ENCODE measurements at regions of chr6 and their contacts with region 1.

Region 1: DNA sequence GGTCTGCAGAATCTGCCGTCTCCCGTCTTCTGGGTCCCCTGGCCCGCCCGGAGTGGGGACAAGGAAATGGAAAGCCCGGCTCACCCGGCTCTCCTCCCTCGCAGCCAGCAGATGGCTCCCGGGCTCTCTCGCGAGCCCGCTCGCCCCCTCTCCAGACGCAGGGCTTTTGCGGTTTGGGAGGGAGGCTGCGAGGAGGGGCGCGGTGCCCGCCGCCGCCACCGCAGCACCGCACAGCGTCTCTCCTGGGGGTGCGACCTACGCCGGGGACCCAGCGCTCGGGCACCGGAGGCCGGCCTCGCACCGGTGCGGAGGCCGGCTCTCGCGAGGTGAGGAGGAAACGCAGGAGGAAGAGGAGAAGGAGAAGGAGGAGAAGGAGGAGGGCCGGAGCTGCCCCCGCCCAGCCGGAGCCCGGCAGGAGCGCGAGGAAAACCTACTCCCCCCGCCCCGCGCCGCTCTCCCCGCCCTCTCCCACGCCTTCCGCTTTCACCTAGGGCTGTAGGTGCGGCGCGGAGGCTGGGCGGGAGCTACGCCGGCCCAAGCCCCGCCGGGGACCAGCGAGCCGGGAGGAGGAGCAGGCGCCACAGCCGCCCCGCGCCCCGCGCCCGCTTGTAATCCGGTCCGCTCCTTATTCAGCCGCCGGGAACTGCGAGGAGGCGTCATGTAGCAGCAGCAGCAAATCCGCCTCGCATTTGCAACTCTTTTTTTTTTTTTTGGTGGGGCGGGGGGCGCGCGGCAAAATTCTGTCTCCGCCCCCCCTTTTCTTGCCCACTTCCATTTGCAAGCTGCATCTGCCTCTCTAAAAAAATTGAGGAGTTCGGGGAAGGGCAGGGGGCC is at the start of gene CARMIL1:
- DNase-seq: peak; percentile 24 to 88
- H3K4me3 ChIP-seq: peak within 1 kb of the TSS; percentile 67 to 89
- H3K27ac ChIP-seq: peak within 1 kb of the TSS; percentile 71 to 79
- H3K4me1 ChIP-seq: peaks cover 0 to 19% of the 10 kb centered on the region in 2 donors
- H3K27me3 ChIP-seq: no peaks in the 10 kb centered on the region
- CTCF ChIP-seq: peak; percentile 88 to 90 (median 89)
- total RNA-seq, gene CARMIL1: 16.1 TPM

Region 2: DNA sequence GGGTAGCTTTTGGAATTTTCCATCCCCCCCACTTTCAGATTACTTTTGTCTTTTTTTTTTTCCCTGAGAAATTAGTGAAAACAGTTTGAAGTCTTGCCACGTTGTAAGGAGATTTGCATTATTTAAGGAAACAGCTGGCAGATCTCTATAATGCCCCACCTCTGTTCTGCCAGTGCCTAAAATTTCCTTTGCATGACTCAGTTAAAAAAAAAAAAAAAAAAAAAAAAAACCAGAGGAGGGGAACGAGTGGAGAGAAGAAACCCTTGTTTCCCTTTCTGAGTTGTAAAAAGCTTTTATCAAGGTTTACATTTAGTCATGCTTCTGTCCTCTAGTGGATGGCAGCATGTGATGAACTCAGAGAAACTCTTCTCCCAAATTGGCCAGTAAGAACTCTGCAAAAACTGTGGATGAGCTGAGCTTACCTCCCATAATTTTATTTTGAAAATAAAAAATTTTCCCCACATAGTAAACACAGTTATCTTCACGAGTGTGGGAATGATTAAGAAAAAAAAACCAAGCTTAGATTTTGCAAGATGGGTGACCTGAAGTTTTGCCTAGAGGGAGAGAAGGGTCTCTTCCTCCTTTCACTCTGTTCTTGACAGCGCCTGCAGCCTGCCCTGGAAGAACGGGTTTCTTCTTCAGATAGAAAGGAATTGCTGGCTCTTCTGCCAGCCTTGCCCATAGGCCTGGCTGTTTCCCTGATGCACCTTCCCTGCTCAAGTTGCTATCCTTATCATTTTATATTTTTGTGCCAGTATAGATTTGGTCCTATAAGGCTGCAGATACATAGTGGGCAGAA is 33.8 kb after region 1 on chr6:
- intact Hi-C with region 1: loop called (anchors 2 kb)
- DNase-seq: no peak
- H3K4me3 ChIP-seq: peak overlapping the region in 1 of 2 donors; percentile 13
- H3K27ac ChIP-seq: peak overlapping the region; percentile 12 to 77
- H3K4me1 ChIP-seq: peaks cover 3 to 60% of the 10 kb centered on the region in 2 donors
- H3K27me3 ChIP-seq: no peaks in the 10 kb centered on the region
- CTCF ChIP-seq: no peak

Region 3: DNA sequence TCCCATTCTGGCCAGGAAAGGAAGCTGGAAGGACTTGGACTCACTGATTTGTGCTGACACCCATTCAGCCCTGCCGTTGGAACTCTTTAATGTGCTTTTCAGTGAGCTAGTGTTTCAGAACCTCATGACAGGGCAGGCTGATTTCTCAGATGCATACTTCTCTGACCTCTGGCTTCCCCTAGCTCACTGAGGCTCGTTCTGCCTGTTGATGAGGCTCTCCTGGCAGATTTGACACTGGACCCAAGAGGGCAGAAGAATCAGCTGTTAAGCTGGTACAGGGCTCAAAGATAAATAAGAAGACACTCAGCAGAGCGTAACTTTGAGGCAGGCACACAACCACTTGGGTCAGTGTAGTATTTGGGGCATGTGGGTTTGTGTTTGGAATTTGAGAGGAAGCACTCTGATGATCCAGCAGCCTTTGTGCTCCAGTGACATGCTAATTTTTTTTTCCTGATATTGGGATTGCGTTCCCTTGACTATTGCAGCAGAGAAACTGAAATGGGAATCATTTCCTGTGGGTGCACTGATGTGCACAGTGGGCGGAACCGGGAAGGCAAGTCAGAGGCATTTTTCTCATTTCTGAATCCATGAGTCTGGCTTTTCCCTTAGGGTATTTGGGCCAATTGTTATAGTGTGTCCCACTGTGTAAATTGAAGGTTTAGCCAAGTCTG is 80.2 kb after region 1 on chr6:
- intact Hi-C with region 1: loop called (anchors 1 kb)
- DNase-seq: peak in 1 of 2 donors; percentile 85
- H3K4me3 ChIP-seq: peak overlapping the region in 1 of 2 donors; percentile 23
- H3K27ac ChIP-seq: peak overlapping the region; percentile 77 to 91
- H3K4me1 ChIP-seq: peaks cover 9 to 76% of the 10 kb centered on the region in 2 donors
- H3K27me3 ChIP-seq: no peaks in the 10 kb centered on the region
- CTCF ChIP-seq: no peak

Region 4: DNA sequence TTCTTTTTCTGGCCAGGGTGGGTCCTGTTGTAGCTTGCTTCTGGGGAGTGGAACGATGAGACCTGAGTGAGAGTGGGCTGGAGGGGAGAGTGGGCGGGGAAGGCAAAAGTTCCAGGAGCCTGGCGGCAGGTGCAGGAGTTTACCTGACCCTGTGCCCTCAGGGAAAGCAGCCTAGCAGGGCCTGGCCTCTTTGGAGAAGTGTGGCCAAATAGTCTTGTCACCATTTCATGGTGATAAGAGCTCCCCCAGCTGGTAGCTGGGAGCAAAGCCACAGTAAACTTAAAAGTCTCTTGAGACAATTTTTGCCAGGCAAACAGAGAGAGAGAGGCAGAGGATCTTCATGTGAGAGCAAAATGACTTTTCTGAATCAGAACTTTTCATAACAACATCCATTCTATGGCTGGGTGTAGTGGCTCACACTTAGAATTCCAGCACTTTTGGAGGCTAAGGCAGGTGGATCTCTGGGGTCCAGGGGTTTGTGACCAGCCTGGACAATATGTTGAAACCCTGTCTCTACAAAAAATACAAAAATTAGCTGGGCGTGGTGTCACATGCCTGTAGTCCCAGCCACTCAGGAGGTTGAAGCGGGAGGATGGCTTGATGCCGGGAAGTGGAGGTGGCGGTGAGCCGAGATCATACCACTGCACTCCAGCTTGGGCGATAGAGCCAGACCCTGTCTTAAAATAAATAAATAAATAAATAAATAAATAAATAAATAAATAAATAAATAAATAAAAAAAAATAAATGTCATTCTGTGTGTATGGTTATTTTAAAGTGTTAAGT is 211.1 kb after region 1 on chr6:
- intact Hi-C with region 1: loop called (anchors 1 kb)
- DNase-seq: peak; percentile 10 to 87
- H3K4me3 ChIP-seq: no peak overlapping the region
- H3K27ac ChIP-seq: peak overlapping the region in 1 of 2 donors; percentile 5
- H3K4me1 ChIP-seq: peaks cover 0 to 9% of the 10 kb centered on the region in 2 donors
- H3K27me3 ChIP-seq: no peaks in the 10 kb centered on the region
- CTCF ChIP-seq: peak; percentile 76 to 89 (median 78)

Measured in ascending aorta (tissue), 2 donors.